PC-3 (cell line): ENCODE measurements at regions of chr18 and their contacts with region 1.

Region 1: DNA sequence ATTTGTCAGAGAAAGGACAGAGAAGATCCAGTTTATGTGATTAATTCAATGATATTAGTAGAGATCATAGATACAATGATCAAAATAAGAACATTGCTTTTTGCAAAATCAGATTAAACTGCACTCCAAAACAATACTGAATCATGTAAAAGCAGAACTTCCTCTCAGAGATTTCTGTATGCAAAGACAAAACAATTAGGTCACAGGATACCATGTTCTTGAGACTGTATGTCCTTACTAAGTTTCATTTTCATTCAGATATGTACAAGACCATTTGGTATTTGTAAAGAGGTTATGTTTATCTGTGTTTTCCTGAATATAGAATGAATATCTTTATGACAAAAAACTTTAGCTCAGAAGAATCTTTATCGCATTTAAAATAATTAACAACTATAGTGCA is 161.8 kb downstream of the DLGAP1 start:
- DNase-seq: no peak
- ATAC-seq: no peak
- H3K4me3 ChIP-seq: no peak overlapping the region
- H3K27ac ChIP-seq: no peak overlapping the region
- H3K4me1 ChIP-seq: no peaks in the 10 kb centered on the region
- H3K27me3 ChIP-seq: no peaks in the 10 kb centered on the region
- CTCF ChIP-seq: no peak

Region 2: DNA sequence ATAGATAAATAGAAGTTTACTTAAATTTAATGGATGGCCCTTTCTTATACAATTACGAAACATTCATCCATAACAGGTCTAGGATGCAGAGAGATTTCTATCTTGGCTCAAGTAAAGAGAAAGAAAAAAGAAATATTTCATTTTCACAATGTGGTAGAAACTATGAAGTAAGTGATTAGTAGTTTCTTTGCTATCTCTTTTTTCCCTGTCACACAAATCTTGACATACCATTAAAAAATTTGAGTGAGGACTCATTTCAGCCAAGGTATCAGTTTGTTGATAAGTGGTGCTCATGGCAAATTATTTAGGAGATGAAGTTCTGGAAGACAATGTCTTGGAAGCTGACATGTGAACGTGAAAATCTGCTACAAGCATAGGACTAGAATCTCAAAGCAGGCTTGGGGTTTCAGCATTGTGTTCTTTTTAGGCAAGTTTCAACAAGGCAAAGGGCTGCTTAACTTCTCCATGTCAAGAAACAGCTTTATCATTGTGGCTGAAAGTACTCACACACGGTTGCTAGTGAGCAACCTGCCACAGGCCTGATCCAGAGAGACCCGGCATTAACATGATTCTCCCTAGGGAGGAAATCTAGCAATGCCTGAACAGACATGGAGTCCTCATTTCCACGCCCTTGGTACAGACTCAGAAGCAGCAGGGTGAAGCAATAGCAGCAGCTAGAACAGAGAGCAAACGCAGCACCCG is 252.8 kb before region 1 on chr18:
- CTCF ChIA-PET with region 1: no interaction called
- POLR2A ChIA-PET with region 1: no interaction called
- intact Hi-C with region 1: no loop called
- DNase-seq: no peak
- ATAC-seq: no peak
- H3K4me3 ChIP-seq: no peak overlapping the region
- H3K27ac ChIP-seq: no peak overlapping the region
- H3K4me1 ChIP-seq: no peaks in the 10 kb centered on the region
- H3K27me3 ChIP-seq: 0 out of 2 replicates have a peak, but pooled peaks cover 3% of the 10 kb centered on the region
- CTCF ChIP-seq: no peak

Region 3: DNA sequence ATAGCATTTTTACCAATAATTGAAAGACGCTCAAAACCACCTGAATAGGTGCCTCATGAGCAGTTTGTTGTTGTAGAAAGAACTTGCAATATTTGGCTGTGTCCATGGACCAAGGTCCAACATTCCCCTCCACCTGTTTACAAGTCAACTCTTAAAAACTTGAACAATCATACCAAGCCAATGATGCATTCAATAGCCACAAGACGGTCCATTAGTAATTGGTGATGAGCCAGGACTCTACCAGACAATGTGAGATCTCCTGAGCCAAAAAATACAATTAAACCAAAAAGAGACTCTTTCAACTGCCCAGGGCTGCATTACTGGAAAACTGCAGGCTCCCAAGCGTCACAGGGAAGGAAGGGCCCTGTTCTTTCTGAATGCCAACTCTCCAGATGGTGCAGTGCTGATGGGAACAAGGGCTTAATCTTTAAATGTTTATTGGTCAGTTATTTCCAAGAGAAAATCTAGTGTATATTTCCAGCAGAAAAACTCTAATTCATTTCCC is 1369.3 kb after region 1 on chr18:
- CTCF ChIA-PET with region 1: interaction called, 10 read pairs
- POLR2A ChIA-PET with region 1: no interaction called
- intact Hi-C with region 1: no loop called
- DNase-seq: no peak
- ATAC-seq: no peak
- H3K4me3 ChIP-seq: no peak overlapping the region
- H3K27ac ChIP-seq: no peak overlapping the region
- H3K4me1 ChIP-seq: no peaks in the 10 kb centered on the region
- H3K27me3 ChIP-seq: no peaks in the 10 kb centered on the region
- CTCF ChIP-seq: no peak